ENCODE measurements at regions of chr6 and their contacts with region 1.

Region 1: DNA sequence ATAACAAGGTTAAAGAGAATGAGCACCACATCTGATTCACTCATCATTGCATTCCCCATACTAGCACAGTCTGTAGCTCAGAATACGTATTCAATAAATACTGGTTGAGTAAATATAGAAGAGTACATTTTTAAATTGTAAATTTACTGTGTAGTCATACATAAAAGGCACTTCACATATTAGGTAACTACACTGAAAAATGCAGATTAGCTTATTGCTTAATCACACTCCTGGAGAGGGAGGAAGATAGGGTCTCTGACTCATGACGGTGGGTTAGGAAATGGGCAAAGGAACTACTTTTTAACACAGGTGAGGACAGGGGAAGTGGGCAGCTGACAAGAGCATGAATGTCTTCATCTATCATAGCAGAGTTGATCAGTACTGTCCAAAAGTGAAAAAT is 133.2 kb downstream of the TBC1D32 start:
- DNase-seq: no peak
- ATAC-seq: no peak

Region 2: GRCh38 chr6:119314885-119315272 is 1886.2 kb before region 1 on chr6:
- intact Hi-C with region 1: loop called (anchors 5 kb)
- DNase-seq: no peak
- ATAC-seq: peak; percentile 42

Region 3: DNA sequence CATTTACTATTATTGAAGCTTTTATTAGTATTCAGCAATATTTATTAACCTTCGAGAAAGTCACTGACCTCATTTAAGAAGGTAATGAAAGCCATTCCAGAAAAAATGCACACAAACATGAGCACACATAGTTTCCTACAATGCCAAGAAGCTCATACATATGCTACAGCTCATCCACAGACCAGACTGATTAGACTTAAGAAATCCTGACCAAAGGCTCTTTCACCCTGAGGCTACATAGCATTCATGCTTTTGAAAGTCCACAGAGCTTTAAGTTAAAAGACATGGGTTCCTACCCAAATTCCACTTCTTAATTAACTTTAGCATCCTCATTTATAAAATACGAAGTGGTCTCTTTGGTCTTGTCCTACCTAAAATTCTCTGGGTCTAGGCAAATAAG is 297.3 kb before region 1 on chr6:
- intact Hi-C with region 1: no loop called
- DNase-seq: no peak
- ATAC-seq: no peak